ENCODE measurements at regions of chr2 and their contacts with region 1.

Region 1: GRCh38 chr2:37489041-37489456 is 144.6 kb downstream of the QPCT start:
- DNase-seq: no peak
- ATAC-seq: no peak
- H3K4me3 ChIP-seq: no peak overlapping the region
- H3K4me3 Mint-ChIP-seq: no peak overlapping the region
- H3K27ac ChIP-seq: no peak overlapping the region
- H3K27ac Mint-ChIP-seq: no peak overlapping the region
- H3K4me1 ChIP-seq: no peaks in the 10 kb centered on the region
- H3K4me1 Mint-ChIP-seq: no peaks in the 10 kb centered on the region
- H3K27me3 ChIP-seq: no peaks in the 10 kb centered on the region
- H3K27me3 Mint-ChIP-seq: no peaks in the 10 kb centered on the region

Region 2: DNA sequence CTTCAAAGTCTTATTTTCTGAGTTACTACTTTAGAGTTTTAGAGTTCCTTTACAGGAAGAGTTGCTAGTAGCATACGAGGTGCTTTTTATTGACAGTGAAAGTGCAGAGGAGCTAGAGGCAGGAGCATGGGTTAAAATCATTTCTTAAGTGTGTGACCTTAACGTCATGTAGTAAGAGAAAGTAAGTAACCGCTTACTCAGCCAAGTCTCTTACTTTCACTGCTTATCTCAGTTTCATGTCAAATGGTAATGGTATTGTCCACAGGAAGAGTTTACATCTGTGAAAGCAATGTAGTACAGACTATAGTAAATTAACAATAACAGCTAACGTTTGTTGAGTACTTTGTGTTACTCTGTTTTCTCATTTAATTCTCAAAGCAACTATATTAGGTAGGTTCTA is 245.0 kb before region 1 on chr2:
- CTCF ChIA-PET with region 1: no interaction called
- POLR2A ChIA-PET with region 1: no interaction called
- DNase-seq: peak in 1 of 35 experiments; percentile 5
- ATAC-seq: peak; percentile 26 to 47 (median 32)
- H3K4me3 ChIP-seq: no peak overlapping the region
- H3K4me3 Mint-ChIP-seq: peak overlapping the region in 2 of 3 donors; percentile 8 to 29
- H3K27ac ChIP-seq: peak overlapping the region; percentile 41
- H3K27ac Mint-ChIP-seq: peak overlapping the region; percentile 29 to 88
- H3K4me1 ChIP-seq: no peaks in the 10 kb centered on the region
- H3K4me1 Mint-ChIP-seq: peaks cover 21 to 31% (median 29%) of the 10 kb centered on the region in 3 donors
- H3K27me3 ChIP-seq: no peaks in the 10 kb centered on the region
- H3K27me3 Mint-ChIP-seq: no peaks in the 10 kb centered on the region

Region 3: DNA sequence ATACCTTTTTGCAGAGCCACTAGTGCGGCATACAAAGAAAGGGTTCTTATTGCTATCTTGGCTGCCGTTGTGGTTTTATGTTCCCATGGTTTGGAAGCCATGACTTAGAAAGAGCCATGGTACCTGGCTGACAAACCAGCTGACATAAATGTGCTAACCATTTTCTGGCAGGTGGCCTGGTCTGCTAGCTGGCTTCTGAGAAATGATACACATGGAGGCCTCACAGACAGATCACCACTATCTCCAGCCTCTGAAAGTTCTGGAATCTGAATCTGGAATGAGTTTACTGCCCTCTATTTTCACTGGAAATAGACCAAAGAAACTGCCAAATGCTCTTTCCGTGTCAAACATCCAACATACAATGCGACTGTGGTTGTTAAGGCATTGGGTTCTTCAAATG is 20.9 kb before region 1 on chr2:
- CTCF ChIA-PET with region 1: no interaction called
- POLR2A ChIA-PET with region 1: no interaction called
- DNase-seq: no peak
- ATAC-seq: no peak
- H3K4me3 ChIP-seq: no peak overlapping the region
- H3K4me3 Mint-ChIP-seq: no peak overlapping the region
- H3K27ac ChIP-seq: no peak overlapping the region
- H3K27ac Mint-ChIP-seq: no peak overlapping the region
- H3K4me1 ChIP-seq: no peaks in the 10 kb centered on the region
- H3K4me1 Mint-ChIP-seq: peaks cover 0 to 9% (median 3%) of the 10 kb centered on the region in 3 donors
- H3K27me3 ChIP-seq: no peaks in the 10 kb centered on the region
- H3K27me3 Mint-ChIP-seq: peaks cover 0 to 5% of the 10 kb centered on the region in 2 donors

Region 4: DNA sequence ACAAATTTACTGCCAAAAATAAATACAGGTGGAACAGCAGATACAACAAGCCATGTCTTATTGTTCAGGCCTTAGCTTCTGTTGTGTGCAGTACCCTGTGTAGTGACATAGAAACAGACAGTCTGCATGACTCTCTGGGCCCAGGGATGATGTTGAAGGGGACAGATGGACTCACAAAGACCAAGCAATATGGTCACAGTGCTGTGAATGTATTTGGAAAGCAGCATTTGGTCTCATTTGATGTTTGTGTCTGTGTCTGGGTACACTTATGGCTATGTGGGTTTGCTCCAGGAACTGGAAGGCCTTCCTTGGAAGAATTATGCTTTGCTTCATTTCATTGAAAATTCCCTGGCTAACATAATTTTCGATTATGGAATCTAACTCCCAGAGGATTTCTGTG is 23.9 kb after region 1 on chr2:
- CTCF ChIA-PET with region 1: no interaction called
- POLR2A ChIA-PET with region 1: no interaction called
- DNase-seq: no peak
- ATAC-seq: no peak
- H3K4me3 ChIP-seq: no peak overlapping the region
- H3K4me3 Mint-ChIP-seq: no peak overlapping the region
- H3K27ac ChIP-seq: no peak overlapping the region
- H3K27ac Mint-ChIP-seq: no peak overlapping the region
- H3K4me1 ChIP-seq: no peaks in the 10 kb centered on the region
- H3K4me1 Mint-ChIP-seq: no peaks in the 10 kb centered on the region
- H3K27me3 ChIP-seq: no peaks in the 10 kb centered on the region
- H3K27me3 Mint-ChIP-seq: no peaks in the 10 kb centered on the region

Region 5: DNA sequence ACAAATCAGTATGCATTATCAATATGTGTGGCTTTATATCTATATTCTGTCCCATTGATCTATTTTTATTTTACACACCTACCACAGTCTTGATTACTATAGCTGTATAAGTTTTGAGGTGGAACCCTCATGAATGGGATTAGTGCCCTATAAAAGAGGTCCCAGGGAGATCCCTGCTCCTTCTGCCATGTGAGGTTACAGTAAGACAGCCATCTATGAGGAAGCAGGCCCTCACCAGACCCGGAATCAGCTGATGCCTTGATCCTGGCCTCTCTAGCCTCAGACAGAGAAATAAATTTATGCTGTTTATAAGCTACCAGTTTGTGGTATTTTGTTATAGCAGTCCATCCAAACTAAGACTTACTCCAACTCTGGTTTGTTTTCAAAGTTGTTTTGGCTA is 1058.7 kb after region 1 on chr2:
- CTCF ChIA-PET with region 1: no interaction called
- POLR2A ChIA-PET with region 1: interaction called in 1 of 2 experiments, 12 read pairs
- DNase-seq: no peak
- ATAC-seq: no peak
- H3K4me3 ChIP-seq: no peak overlapping the region
- H3K4me3 Mint-ChIP-seq: no peak overlapping the region
- H3K27ac ChIP-seq: no peak overlapping the region
- H3K27ac Mint-ChIP-seq: no peak overlapping the region
- H3K4me1 ChIP-seq: peaks cover 0 to 8% of the 10 kb centered on the region in 2 experiments
- H3K4me1 Mint-ChIP-seq: peaks cover 14 to 20% (median 18%) of the 10 kb centered on the region in 3 donors
- H3K27me3 ChIP-seq: no peaks in the 10 kb centered on the region
- H3K27me3 Mint-ChIP-seq: no peaks in the 10 kb centered on the region